Panc1 (cell line): ENCODE measurements at regions of chr7 and their contacts with region 1.

Region 1: DNA sequence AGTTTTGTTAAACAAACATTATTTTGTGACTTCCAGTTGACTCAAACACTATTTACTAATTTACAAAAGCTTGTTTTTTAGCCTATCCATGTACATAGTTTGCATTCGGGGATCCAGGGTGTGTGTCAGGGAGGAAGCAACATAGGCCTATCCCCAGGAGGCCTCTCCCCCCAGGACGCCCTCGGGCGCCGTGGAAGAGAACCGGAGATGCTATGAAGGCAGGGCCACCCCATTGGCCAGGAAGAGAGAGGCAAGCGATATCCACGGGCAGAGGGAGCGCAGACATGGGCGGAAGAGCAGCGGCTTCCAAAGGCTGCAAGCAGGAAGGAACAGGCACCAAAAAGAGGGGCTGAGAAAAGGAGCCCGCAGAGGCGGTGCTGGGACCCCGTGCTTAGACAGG is 38.3 kb upstream of the EGFR start:
- DNase-seq: no peak
- ATAC-seq: no peak
- H3K4me3 ChIP-seq: no peak overlapping the region
- H3K27ac ChIP-seq: no peak overlapping the region
- H3K4me1 ChIP-seq: peaks cover under 1% of the 10 kb centered on the region; the same call in 1 of the 2 replicates
- H3K27me3 ChIP-seq: no peaks in the 10 kb centered on the region
- CTCF ChIP-seq: no peak

Region 2: DNA sequence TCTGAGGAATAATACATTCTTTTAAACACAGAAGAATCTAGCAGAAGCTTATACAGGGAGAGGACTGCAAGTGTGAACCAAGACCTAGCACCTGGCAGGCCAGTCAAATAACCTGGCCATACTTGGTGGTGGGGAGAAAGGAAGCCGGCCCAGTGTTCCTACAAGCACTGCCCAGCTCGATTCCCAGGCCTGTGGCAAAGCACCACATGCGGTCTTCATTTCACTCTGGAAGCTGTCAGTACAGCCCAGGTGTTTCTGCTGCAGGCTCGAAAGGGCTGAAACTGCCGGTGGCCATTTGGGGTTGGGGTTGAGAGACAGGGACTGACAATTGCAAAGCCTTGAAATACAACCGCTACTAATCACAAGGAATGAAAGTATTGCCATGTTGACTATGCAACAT is 12.5 kb before region 1 on chr7:
- CTCF ChIA-PET with region 1: no interaction called
- POLR2A ChIA-PET with region 1: no interaction called
- in situ Hi-C with region 1: no loop called
- intact Hi-C with region 1: loop called (anchors 1 kb)
- DNase-seq: no peak
- ATAC-seq: no peak
- H3K4me3 ChIP-seq: no peak overlapping the region
- H3K27ac ChIP-seq: peak overlapping the region; percentile 51; the same call in 1 of the 2 replicates
- H3K4me1 ChIP-seq: 0 out of 2 replicates have a peak, but pooled peaks cover 8% of the 10 kb centered on the region
- H3K27me3 ChIP-seq: no peaks in the 10 kb centered on the region
- CTCF ChIP-seq: no peak